H1 (cell line): ENCODE measurements at regions of chr16 and their contacts with region 1.

Region 1: GRCh38 chr16:65916995-65917394 is 449.5 kb upstream of the CDH5 start:
- DNase-seq: no peak
- H3K4me3 ChIP-seq: no peak overlapping the region
- H3K27ac ChIP-seq: no peak overlapping the region
- H3K4me1 ChIP-seq: peaks cover 0 to 5% (median under 1%) of the 10 kb centered on the region in 4 experiments; a peak in 3 of 7 replicates
- H3K27me3 ChIP-seq: peaks cover 0 to 2% (median 0%) of the 10 kb centered on the region in 4 experiments; a peak in 2 of 7 replicates
- CTCF ChIP-seq: peak in 1 of 3 experiments; percentile 35; a peak in 1 of 4 replicates
- EP300 ChIP-seq: no peak
- POLR2A ChIP-seq: no peak
- RAD21 ChIP-seq: peak; percentile 27 to 47; a peak in 3 of 4 replicates

Region 2: DNA sequence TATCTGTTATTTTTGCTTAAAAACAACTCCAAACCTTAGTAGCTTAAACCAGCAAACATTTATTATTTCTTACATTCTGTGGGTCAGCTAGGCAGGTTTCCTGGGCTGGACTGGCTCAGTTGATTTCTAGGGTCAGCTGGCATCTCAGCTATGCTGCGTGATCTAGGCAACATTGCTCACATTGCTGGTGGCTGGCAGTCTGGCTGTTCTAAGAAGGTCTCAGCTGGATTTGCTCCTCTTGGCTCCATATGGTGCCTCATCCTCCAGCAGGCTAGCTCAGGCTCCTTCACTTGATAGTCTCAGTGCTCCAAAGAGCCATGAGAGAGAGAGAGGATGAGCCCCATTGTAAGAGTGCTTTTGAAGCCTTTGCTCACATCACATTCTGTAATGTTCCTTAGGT is 21.1 kb before region 1 on chr16:
- CTCF ChIA-PET with region 1: interaction called, 11 read pairs
- POLR2A ChIA-PET with region 1: no interaction called
- DNase-seq: no peak
- H3K4me3 ChIP-seq: no peak overlapping the region
- H3K27ac ChIP-seq: no peak overlapping the region
- H3K4me1 ChIP-seq: no peaks in the 10 kb centered on the region; a peak in 2 of 7 replicates
- H3K27me3 ChIP-seq: no peaks in the 10 kb centered on the region; a peak in 1 of 7 replicates
- CTCF ChIP-seq: no peak
- EP300 ChIP-seq: no peak
- POLR2A ChIP-seq: no peak
- RAD21 ChIP-seq: no peak